ENCODE measurements at regions of chr4 and their contacts with region 1.

Region 1: GRCh38 chr4:48247142-48247877 is 22.3 kb downstream of the TEC start:
- DNase-seq: peak; percentile 51
- ATAC-seq: peak; percentile 74
- H3K4me3 ChIP-seq: 0 out of 2 replicates have a peak overlapping the region, but pooled peaks have one; percentile 25
- H3K27ac ChIP-seq: peak overlapping the region; percentile 79
- H3K4me1 ChIP-seq: peaks cover 28% of the 10 kb centered on the region
- H3K27me3 ChIP-seq: no peaks in the 10 kb centered on the region
- CTCF ChIP-seq: no peak
- EP300 ChIP-seq: no peak
- POLR2A ChIP-seq: no peak
- RAD21 ChIP-seq: no peak

Region 2: GRCh38 chr4:48227659-48228058 is 19.7 kb before region 1 on chr4:
- CTCF ChIA-PET with region 1: interaction called, 3 read pairs
- POLR2A ChIA-PET with region 1: interaction called, 3 read pairs
- RAD21 ChIA-PET with region 1: interaction called, 6 read pairs
- SMC1A ChIA-PET with region 1: interaction called, 39 read pairs
- in situ Hi-C with region 1: no loop called
- intact Hi-C with region 1: no loop called
- DNase-seq: no peak
- ATAC-seq: peak; percentile 73
- H3K4me3 ChIP-seq: no peak overlapping the region
- H3K27ac ChIP-seq: no peak overlapping the region
- H3K4me1 ChIP-seq: peaks cover 3% of the 10 kb centered on the region; the same call in 1 of the 2 replicates
- H3K27me3 ChIP-seq: no peaks in the 10 kb centered on the region
- CTCF ChIP-seq: no peak
- EP300 ChIP-seq: no peak
- POLR2A ChIP-seq: no peak
- RAD21 ChIP-seq: no peak

Region 3: GRCh38 chr4:48262926-48263325 is 15.6 kb after region 1 on chr4:
- CTCF ChIA-PET with region 1: interaction called, 5 read pairs
- POLR2A ChIA-PET with region 1: interaction called, 7 read pairs
- RAD21 ChIA-PET with region 1: interaction called, 8 read pairs
- SMC1A ChIA-PET with region 1: interaction called, 36 read pairs
- in situ Hi-C with region 1: no loop called
- intact Hi-C with region 1: loop called (anchors 2 kb)
- DNase-seq: no peak
- ATAC-seq: no peak
- H3K4me3 ChIP-seq: no peak overlapping the region
- H3K27ac ChIP-seq: no peak overlapping the region
- H3K4me1 ChIP-seq: peaks cover 27% of the 10 kb centered on the region
- H3K27me3 ChIP-seq: no peaks in the 10 kb centered on the region
- CTCF ChIP-seq: no peak
- EP300 ChIP-seq: no peak
- POLR2A ChIP-seq: no peak
- RAD21 ChIP-seq: no peak

Region 4: GRCh38 chr4:48420144-48420543 is 172.8 kb after region 1 on chr4:
- CTCF ChIA-PET with region 1: no interaction called
- POLR2A ChIA-PET with region 1: no interaction called
- RAD21 ChIA-PET with region 1: no interaction called
- SMC1A ChIA-PET with region 1: no interaction called
- in situ Hi-C with region 1: no loop called
- intact Hi-C with region 1: no loop called
- DNase-seq: no peak
- ATAC-seq: no peak
- H3K4me3 ChIP-seq: no peak overlapping the region
- H3K27ac ChIP-seq: no peak overlapping the region
- H3K4me1 ChIP-seq: no peaks in the 10 kb centered on the region
- H3K27me3 ChIP-seq: no peaks in the 10 kb centered on the region
- CTCF ChIP-seq: no peak
- EP300 ChIP-seq: no peak
- POLR2A ChIP-seq: no peak
- RAD21 ChIP-seq: no peak